GM12878 (cell line): ENCODE measurements at regions of chr9 and their contacts with region 1.

Region 1: GRCh38 chr9:114397848-114398605 is 10.2 kb upstream of the AKNA start:
- DNase-seq: peak; percentile 80
- ATAC-seq: peak; percentile 89
- H3K4me3 ChIP-seq: peak overlapping the region; percentile 95
- H3K27ac ChIP-seq: peak overlapping the region; percentile 87
- H3K4me1 ChIP-seq: peaks cover 21% of the 10 kb centered on the region
- H3K27me3 ChIP-seq: no peaks in the 10 kb centered on the region
- CTCF ChIP-seq: 0 out of 6 replicates have a peak, but pooled peaks of 1 of the 3 experiments have one; percentile 1
- EP300 ChIP-seq: peak; percentile 51 to 62; a peak in 2 of 4 replicates
- POLR2A ChIP-seq: peak; percentile 81
- RAD21 ChIP-seq: 0 out of 2 replicates have a peak, but pooled peaks have one; percentile 12

Region 2: GRCh38 chr9:114339130-114339908 is 58.7 kb before region 1 on chr9:
- CTCF ChIA-PET with region 1: interaction called, 31 read pairs
- POLR2A ChIA-PET with region 1: interaction called, 6 read pairs
- RAD21 ChIA-PET with region 1: interaction called, 29 read pairs
- SMC1A ChIA-PET with region 1: interaction called, 9 read pairs
- in situ Hi-C with region 1: no loop called
- intact Hi-C with region 1: loop called (anchors 2 kb)
- DNase-seq: peak; percentile 46
- ATAC-seq: peak; percentile 96
- H3K4me3 ChIP-seq: no peak overlapping the region
- H3K27ac ChIP-seq: no peak overlapping the region
- H3K4me1 ChIP-seq: peaks cover 6% of the 10 kb centered on the region; the same call in 1 of the 2 replicates
- H3K27me3 ChIP-seq: no peaks in the 10 kb centered on the region
- CTCF ChIP-seq: peak; percentile 89 to 96 (median 90); a peak in 5 of 6 replicates
- EP300 ChIP-seq: 0 out of 4 replicates have a peak, but pooled peaks of 1 of the 2 experiments have one; percentile 35
- POLR2A ChIP-seq: no peak; the same call in 1 of the 2 replicates
- RAD21 ChIP-seq: peak; percentile 75

Region 3: GRCh38 chr9:114348906-114349482 is 49.0 kb before region 1 on chr9:
- CTCF ChIA-PET with region 1: no interaction called
- POLR2A ChIA-PET with region 1: interaction called, 5 read pairs
- RAD21 ChIA-PET with region 1: interaction called, 10 read pairs
- SMC1A ChIA-PET with region 1: interaction called, 9 read pairs
- in situ Hi-C with region 1: no loop called
- intact Hi-C with region 1: no loop called
- DNase-seq: peak; percentile 94
- ATAC-seq: peak; percentile 96
- H3K4me3 ChIP-seq: no peak overlapping the region
- H3K27ac ChIP-seq: peak overlapping the region; percentile 29
- H3K4me1 ChIP-seq: peaks cover 25% of the 10 kb centered on the region
- H3K27me3 ChIP-seq: no peaks in the 10 kb centered on the region
- CTCF ChIP-seq: no peak
- EP300 ChIP-seq: peak; percentile 65 to 75
- POLR2A ChIP-seq: peak; percentile 59; the same call in 1 of the 2 replicates
- RAD21 ChIP-seq: no peak

Region 4: GRCh38 chr9:114366334-114367128 is 31.5 kb before region 1 on chr9:
- CTCF ChIA-PET with region 1: interaction called, 5 read pairs
- POLR2A ChIA-PET with region 1: interaction called, 312 read pairs
- RAD21 ChIA-PET with region 1: interaction called, 251 read pairs
- SMC1A ChIA-PET with region 1: interaction called, 327 read pairs
- in situ Hi-C with region 1: no loop called
- intact Hi-C with region 1: loop called (anchors 1 kb)
- DNase-seq: no peak
- ATAC-seq: peak; percentile 75
- H3K4me3 ChIP-seq: 0 out of 2 replicates have a peak overlapping the region, but pooled peaks have one; percentile 1
- H3K27ac ChIP-seq: peak overlapping the region; percentile 78
- H3K4me1 ChIP-seq: peaks cover 65% of the 10 kb centered on the region
- H3K27me3 ChIP-seq: no peaks in the 10 kb centered on the region
- CTCF ChIP-seq: no peak
- EP300 ChIP-seq: peak; percentile 61 to 79; a peak in 3 of 4 replicates
- POLR2A ChIP-seq: no peak
- RAD21 ChIP-seq: no peak